PC-3 (cell line): ENCODE measurements at regions of chr1 and their contacts with region 1.

Region 1: GRCh38 chr1:7993593-7994479 is 32.3 kb downstream of the ERRFI1 start:
- DNase-seq: no peak
- ATAC-seq: no peak
- H3K4me3 ChIP-seq: no peak overlapping the region
- H3K27ac ChIP-seq: no peak overlapping the region
- H3K4me1 ChIP-seq: no peaks in the 10 kb centered on the region
- H3K27me3 ChIP-seq: no peaks in the 10 kb centered on the region
- CTCF ChIP-seq: no peak

Region 2: DNA sequence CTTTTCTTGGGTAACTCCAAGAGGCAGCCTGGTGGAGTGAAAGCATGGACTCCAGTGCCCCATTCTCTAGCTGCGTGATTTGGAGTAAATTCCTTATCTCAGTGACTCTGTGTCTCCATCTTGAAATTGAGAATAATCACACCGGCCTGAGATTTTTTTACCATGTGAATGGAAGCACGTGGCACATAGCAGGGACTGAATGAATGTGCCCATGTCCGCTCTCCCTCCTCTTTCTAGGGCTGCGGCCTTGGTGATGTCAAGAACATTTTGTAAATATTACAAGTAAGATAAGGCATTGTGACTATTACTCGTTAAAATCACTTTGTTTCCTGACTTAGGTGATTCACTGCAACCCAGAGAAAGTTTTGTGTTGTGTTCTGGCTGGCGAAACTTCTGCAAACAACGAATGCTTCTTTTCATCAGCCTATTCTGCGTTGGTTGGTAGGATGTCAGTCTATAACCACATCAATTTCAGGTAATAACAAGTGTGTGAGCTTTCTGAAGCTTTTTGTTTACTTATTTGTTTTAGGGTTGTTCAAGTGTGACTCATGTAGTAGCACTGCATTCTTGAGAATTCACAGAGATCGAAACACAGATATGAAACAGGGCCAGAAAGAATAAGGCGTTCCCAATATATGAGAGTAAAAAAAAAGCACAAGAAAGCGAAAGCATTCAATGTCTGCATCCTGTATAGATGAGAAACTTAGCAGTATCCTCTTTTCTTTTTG is 188.4 kb after region 1 on chr1:
- CTCF ChIA-PET with region 1: no interaction called
- POLR2A ChIA-PET with region 1: no interaction called
- intact Hi-C with region 1: no loop called
- DNase-seq: peak; percentile 98
- ATAC-seq: peak; percentile 90
- H3K4me3 ChIP-seq: no peak overlapping the region
- H3K27ac ChIP-seq: peak overlapping the region; percentile 99
- H3K4me1 ChIP-seq: peaks cover 27% of the 10 kb centered on the region
- H3K27me3 ChIP-seq: no peaks in the 10 kb centered on the region
- CTCF ChIP-seq: no peak

Region 3: DNA sequence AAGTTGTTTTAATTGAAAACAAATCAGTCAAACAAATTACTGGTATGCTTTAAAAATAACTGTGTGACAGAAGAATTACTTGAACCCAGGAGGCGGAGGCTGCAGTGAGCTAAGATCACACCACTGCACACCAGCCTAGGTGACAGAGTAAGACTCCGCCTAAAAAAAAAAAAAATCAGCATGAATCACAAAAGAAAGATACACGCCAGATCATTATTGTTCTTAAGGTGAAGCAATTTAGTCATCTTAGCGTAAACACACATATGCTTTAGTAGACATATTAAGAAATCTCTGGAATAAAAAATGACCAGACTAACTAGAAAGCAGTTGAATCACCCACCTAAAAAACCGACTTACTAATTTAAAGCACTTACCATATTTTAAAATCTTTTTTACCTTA is 803.4 kb after region 1 on chr1:
- CTCF ChIA-PET with region 1: no interaction called
- POLR2A ChIA-PET with region 1: interaction called, 11 read pairs
- intact Hi-C with region 1: no loop called
- DNase-seq: peak; percentile 81
- ATAC-seq: peak; percentile 70
- H3K4me3 ChIP-seq: no peak overlapping the region
- H3K27ac ChIP-seq: peak overlapping the region; percentile 75
- H3K4me1 ChIP-seq: peaks cover 16% of the 10 kb centered on the region
- H3K27me3 ChIP-seq: no peaks in the 10 kb centered on the region
- CTCF ChIP-seq: no peak